ENCODE measurements at regions of chr17 and their contacts with region 1.

Region 1: DNA sequence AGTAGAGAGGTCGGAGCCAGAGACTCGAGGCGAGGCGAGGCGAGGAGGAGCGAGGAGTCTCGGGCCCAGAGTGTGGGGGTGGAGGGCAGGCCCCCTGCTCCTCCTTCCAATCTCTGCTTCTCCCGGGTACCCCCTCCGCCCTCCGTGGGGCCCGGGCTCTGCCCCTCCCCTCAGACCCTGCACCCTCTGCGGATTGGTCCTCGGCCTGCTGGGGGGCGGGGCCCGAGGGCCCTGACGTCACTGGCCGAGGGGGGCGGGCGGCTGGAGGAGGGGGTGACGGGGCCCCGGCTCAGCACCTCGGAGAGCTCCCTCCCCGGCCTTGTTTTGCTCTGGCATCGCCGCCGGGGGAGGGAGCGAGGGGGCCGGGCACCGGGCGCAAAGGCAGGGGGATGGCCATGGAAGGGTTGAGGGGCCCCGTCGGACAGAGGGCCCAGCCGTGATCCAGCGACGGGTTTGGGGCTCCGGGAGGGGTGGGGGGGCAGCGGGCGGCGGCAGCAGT is at the start of gene RUNDC3A:
- DNase-seq: peak; percentile 81
- H3K4me3 ChIP-seq: peak within 1 kb of the TSS; percentile 7 to 45 (median 21)
- H3K27ac ChIP-seq: peak within 1 kb of the TSS; percentile 33 to 77 (median 63)
- H3K4me1 ChIP-seq: peaks cover 6 to 20% (median 14%) of the 10 kb centered on the region in 4 donors
- H3K27me3 ChIP-seq: peaks cover 60% of the 10 kb centered on the region
- CTCF ChIP-seq: no peak
- EP300 ChIP-seq: no peak
- POLR2A ChIP-seq: no peak
- total RNA-seq, gene RUNDC3A: 0.48 to 7.6 (median 1.1) TPM in 3 of 4 donors, not detected in the other

Region 2: DNA sequence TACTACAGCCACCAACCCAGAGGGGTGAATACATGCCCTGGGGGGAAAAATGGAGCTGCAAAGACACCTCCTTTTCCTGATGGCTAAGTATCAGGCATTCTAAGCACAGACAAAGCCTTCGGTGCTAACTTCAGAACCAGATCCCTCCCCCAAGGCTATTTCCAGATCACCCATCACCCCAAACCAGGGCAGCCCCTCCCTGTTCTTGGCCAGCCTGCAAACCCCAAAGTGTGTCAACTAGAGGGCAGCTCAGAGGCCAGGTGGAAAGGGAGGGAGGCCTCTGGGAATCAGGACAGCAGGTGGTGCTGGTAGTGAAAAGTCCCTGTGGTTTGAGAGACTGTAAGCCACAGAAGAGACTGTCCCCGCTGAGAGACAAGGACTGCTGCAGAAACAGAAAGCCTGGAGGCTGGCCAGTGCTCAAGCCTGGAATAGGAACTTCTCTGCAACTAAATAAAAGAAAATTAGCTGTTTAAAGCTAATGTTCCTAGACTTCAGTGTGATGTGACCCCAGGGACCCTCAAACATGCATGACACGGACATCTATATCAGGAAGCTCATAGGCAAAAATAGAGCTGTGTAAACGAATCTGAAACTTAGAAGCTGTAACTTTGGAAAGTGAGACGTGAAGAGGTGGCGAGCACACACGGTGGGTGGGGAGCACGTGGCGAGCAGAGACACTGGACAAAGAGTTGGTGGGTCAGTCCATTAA is 1689.8 kb before region 1 on chr17:
- in situ Hi-C with region 1: no loop called
- intact Hi-C with region 1: loop called (anchors 5 kb)
- DNase-seq: peak; percentile 73
- H3K4me3 ChIP-seq: no peak overlapping the region
- H3K27ac ChIP-seq: peak overlapping the region in 2 of 4 donors; percentile 42 to 59
- H3K4me1 ChIP-seq: peaks cover 0 to 12% (median 2%) of the 10 kb centered on the region in 4 donors
- H3K27me3 ChIP-seq: no peaks in the 10 kb centered on the region
- CTCF ChIP-seq: peak in 3 of 5 experiments; percentile 12 to 35 (median 25)
- EP300 ChIP-seq: no peak
- POLR2A ChIP-seq: no peak

Region 3: DNA sequence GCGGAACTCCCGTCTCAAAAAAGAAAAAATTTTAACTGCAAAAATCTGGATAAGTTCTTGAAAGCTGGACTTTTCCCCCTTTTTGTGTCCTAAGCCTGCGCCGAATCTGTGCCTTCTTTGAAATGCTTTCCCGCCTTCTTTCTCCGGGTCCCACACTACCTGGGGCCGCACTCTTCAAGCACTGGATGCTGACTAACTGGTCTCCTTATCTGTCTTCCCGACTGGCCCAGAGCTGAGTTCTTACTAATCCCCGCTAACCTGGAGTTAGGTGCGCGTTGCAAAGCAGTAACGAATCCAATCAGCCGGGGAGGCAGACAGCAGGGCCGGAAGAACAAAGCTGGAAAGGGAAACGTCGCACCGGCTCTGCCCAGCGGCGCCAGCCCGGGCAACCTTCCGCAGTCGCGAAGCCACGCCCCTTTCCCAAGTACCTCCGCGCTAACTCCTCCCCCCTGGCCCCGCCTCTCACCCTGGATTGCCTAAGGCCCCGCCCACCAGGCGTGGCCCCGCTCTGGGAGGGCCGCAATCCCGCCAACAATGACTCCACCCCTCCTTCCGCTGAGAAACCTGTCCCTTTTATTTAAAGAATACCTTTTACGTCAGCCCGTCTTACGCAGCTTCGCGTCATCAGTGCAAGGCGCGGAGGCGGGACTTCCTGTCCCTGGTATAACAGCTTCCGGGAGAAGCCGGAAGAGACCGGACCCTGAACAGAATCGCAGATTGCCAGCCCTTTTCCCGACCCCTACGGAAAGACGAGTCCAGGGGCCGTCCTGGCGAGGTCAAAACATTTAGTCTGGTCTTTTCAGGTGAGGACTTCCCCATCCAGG is 121.8 kb before region 1 on chr17 and contains the start of gene TMUB2:
- in situ Hi-C with region 1: no loop called
- intact Hi-C with region 1: no loop called
- DNase-seq: peak; percentile 100
- H3K4me3 ChIP-seq: peak within 1 kb of the TSS; percentile 92 to 95 (median 93)
- H3K27ac ChIP-seq: peak within 1 kb of the TSS; percentile 95 to 97 (median 96)
- H3K4me1 ChIP-seq: peaks cover 11 to 29% (median 23%) of the 10 kb centered on the region in 4 donors
- H3K27me3 ChIP-seq: no peaks in the 10 kb centered on the region
- CTCF ChIP-seq: no peak
- EP300 ChIP-seq: peak; percentile 20
- POLR2A ChIP-seq: peak; percentile 84
- total RNA-seq, gene TMUB2: 53.4 to 70.5 (median 60.6) TPM

Region 4: DNA sequence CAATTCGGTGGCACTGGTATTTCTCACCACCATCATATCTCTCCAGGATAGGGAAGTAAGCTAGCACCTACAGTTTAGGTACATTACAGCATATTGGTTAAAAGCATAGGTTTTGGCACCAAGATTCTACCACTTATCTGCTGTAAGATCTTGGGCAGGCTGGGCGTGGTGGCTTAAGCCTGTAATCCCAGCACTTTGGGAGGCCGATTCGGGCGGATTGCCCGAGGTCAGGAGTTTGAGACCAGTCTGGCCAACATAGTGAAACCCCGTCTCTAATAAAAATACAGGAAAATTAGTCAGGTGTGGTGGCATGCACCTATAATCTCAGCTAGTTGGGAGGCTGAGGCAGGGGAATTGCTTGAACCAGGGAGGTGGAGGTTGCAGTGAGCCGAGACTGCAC is 143.5 kb after region 1 on chr17:
- in situ Hi-C with region 1: no loop called
- intact Hi-C with region 1: no loop called
- DNase-seq: no peak
- H3K4me3 ChIP-seq: no peak overlapping the region
- H3K27ac ChIP-seq: no peak overlapping the region
- H3K4me1 ChIP-seq: no peaks in the 10 kb centered on the region
- H3K27me3 ChIP-seq: no peaks in the 10 kb centered on the region
- CTCF ChIP-seq: no peak
- EP300 ChIP-seq: no peak
- POLR2A ChIP-seq: no peak

Measured in transverse colon (tissue), 4 donors.